IMR-90 (cell line): ENCODE measurements at regions of chr16 and their contacts with region 1.

Region 1: DNA sequence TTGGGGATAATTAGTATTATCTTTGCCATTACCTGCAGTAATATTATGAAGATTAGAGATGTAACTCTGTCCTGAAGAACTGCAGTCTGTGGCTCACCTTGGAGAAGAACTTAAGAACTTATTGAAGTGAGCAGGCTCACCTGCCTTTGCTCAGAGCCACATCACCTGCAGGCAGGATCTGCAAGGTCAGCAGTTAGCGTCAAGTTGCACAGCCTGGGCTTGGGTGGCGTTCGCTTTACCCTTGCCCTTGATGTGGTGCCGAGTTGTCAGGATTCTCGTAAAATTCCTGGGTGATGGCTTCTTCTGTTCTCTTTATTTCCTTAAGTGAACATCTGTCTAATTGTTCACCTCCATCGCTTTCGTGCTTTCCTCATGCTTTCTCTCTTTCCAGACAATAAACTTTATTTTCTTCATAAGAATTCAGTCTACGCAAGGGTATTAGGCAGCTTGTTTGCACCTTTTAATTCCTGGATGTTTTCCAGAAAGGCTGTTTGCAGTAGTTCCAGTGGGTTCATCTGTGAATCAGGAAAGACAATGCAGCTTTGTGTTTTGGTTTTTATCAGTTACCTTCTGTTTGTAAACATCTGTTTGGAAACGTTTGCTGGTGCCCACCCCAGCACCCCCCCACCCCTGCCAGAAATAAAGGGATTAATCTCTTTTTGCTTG is 254.3 kb downstream of the WWOX start:
- DNase-seq: no peak
- ATAC-seq: no peak
- H3K4me3 ChIP-seq: no peak overlapping the region
- H3K27ac ChIP-seq: no peak overlapping the region
- H3K4me1 ChIP-seq: no peaks in the 10 kb centered on the region
- H3K27me3 ChIP-seq: no peaks in the 10 kb centered on the region
- CTCF ChIP-seq: no peak
- POLR2A ChIP-seq: no peak
- RAD21 ChIP-seq: no peak

Region 2: DNA sequence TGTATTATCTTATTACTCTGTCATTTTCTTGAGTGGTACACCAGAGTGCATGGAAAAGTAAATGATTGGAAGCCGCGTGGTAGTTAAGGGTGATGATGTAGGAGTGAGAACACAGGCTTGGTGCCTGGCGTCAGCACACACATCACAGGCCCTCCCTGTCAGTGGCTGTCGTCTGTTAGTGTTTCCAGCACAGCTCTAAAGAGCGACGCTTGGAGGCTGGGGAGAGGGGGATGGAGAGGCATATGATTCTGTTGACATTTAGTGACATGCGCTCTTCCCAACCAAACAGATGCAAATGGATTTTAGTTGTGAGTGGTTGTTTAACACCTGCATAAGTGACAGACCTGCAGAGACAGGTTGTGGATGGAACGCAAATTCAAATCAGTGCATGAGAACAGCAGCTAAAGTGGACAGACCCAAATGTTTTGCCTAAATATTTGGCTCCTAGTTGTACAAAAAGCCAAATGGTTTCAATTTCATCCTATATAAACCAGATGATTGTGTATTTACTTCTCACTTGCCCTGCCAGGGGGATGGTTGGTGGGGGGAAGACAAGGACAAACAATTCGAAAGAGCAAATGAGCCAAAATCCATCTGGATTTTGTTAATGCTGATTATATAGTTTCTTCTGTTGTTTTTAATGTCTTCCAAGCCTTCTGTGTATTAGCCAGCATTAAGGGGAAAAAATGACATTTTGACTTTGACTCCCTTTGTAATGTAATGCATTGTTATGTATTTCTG is 32.0 kb before region 1 on chr16:
- CTCF ChIA-PET with region 1: no interaction called
- POLR2A ChIA-PET with region 1: no interaction called
- dilution Hi-C with region 1: no loop called
- in situ Hi-C with region 1: no loop called
- intact Hi-C with region 1: no loop called
- DNase-seq: no peak
- ATAC-seq: no peak
- H3K4me3 ChIP-seq: no peak overlapping the region
- H3K27ac ChIP-seq: no peak overlapping the region
- H3K4me1 ChIP-seq: no peaks in the 10 kb centered on the region
- H3K27me3 ChIP-seq: no peaks in the 10 kb centered on the region
- CTCF ChIP-seq: no peak
- POLR2A ChIP-seq: no peak
- RAD21 ChIP-seq: no peak

Region 3: DNA sequence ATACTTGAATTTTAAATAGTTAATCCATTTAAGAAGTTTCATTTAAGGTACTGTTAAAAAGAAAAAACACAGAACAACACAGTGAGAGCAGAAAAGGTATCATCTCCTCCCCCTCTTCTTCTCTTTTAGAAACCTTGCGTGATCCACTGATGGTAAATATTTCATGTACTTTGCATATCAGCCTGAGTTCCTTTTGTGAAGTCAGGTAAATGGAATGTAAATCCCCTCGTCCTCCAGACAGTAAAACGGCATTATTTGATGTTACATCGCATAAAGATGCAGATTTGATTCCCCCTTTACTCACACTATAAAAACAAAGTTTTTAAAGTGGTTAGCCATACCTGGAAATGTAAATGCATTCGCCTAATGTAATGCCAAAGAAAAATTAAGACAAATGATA is 19.9 kb before region 1 on chr16:
- CTCF ChIA-PET with region 1: no interaction called
- POLR2A ChIA-PET with region 1: no interaction called
- dilution Hi-C with region 1: no loop called
- in situ Hi-C with region 1: no loop called
- intact Hi-C with region 1: loop called (anchors 1 kb)
- DNase-seq: no peak
- ATAC-seq: no peak
- H3K4me3 ChIP-seq: no peak overlapping the region
- H3K27ac ChIP-seq: no peak overlapping the region
- H3K4me1 ChIP-seq: no peaks in the 10 kb centered on the region
- H3K27me3 ChIP-seq: no peaks in the 10 kb centered on the region
- CTCF ChIP-seq: no peak
- POLR2A ChIP-seq: no peak
- RAD21 ChIP-seq: no peak

Region 4: GRCh38 chr16:79691007-79691406 is 1337.3 kb after region 1 on chr16:
- CTCF ChIA-PET with region 1: no interaction called
- POLR2A ChIA-PET with region 1: no interaction called
- dilution Hi-C with region 1: no loop called
- in situ Hi-C with region 1: no loop called
- intact Hi-C with region 1: no loop called
- DNase-seq: no peak
- ATAC-seq: no peak
- H3K4me3 ChIP-seq: no peak overlapping the region
- H3K27ac ChIP-seq: no peak overlapping the region
- H3K4me1 ChIP-seq: no peaks in the 10 kb centered on the region
- H3K27me3 ChIP-seq: no peaks in the 10 kb centered on the region
- CTCF ChIP-seq: no peak
- POLR2A ChIP-seq: no peak
- RAD21 ChIP-seq: no peak